ENCODE measurements at regions of chr9 and their contacts with region 1.

Region 1: GRCh38 chr9:107137495-107138202 is 145.4 kb upstream of the RAD23B start:
- DNase-seq: peak; percentile 17
- ATAC-seq: no peak
- H3K4me3 Mint-ChIP-seq: no peak overlapping the region
- H3K27ac Mint-ChIP-seq: no peak overlapping the region
- H3K4me1 Mint-ChIP-seq: no peaks in the 10 kb centered on the region
- H3K27me3 Mint-ChIP-seq: peaks cover 10% of the 10 kb centered on the region
- CTCF ChIP-seq: peak; percentile 62

Region 2: DNA sequence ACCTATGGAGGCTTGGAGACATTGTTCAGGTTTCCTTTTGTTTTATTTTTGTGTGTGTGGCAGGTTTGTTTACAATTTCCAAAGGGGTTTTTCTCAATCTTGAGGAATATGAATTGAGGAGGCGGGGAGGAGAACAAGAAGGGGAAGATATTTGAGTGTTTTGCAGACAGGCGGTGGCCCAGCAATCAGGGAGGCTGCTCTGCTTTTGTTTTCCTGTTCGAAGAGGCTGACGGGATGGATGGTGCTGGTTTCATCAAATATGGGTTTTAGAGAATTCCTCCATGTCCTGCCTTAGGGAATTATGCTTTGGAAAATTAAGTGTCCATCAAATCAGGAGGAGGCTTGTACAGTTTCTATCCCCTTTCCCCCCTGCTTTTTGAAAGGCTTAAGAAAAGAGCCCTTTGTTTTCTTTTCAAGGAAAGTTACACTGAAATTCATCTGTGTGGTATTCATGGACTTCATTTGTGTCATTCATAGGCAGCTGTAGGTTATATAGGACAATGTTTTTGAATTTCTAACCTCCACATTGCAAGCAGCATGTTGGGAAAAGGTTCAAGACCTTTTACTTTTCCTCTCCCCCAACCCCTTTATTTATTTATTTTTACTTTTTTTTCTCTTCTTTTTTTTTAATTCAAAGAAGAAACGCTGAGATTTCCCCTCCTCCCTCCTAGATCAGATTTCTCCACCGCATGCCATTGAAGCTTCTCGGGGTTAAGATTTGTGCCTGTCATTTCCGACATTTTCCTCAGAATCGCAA is 167.3 kb before region 1 on chr9:
- CTCF ChIA-PET with region 1: no interaction called
- POLR2A ChIA-PET with region 1: no interaction called
- intact Hi-C with region 1: no loop called
- DNase-seq: no peak
- ATAC-seq: no peak
- H3K4me3 Mint-ChIP-seq: no peak overlapping the region
- H3K27ac Mint-ChIP-seq: no peak overlapping the region
- H3K4me1 Mint-ChIP-seq: peaks cover under 1% of the 10 kb centered on the region
- H3K27me3 Mint-ChIP-seq: peaks cover 2% of the 10 kb centered on the region
- CTCF ChIP-seq: no peak

Region 3: DNA sequence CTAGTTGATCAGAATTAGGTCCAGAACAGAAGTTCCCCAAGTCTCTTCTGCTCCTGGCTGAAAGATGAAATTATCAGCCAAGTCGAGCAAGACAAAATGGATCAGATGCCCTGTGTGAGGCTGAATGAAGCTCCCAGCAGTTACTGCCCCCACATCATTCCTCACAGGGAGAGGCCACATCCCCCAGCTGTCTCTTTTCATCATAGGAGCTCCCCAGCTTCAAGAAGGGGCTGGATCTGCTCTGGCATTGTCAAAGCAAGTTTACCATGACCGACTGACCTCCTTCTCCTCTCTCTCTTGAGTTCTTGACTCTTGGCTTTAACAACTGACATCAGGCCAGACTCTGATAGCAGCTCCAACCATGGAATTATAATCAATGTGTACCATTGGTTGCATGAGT is 12.1 kb after region 1 on chr9:
- CTCF ChIA-PET with region 1: interaction called, 13 read pairs
- POLR2A ChIA-PET with region 1: no interaction called
- intact Hi-C with region 1: no loop called
- DNase-seq: no peak
- ATAC-seq: no peak
- H3K4me3 Mint-ChIP-seq: no peak overlapping the region
- H3K27ac Mint-ChIP-seq: no peak overlapping the region
- H3K4me1 Mint-ChIP-seq: no peaks in the 10 kb centered on the region
- H3K27me3 Mint-ChIP-seq: peaks cover 6% of the 10 kb centered on the region
- CTCF ChIP-seq: no peak

Region 4: DNA sequence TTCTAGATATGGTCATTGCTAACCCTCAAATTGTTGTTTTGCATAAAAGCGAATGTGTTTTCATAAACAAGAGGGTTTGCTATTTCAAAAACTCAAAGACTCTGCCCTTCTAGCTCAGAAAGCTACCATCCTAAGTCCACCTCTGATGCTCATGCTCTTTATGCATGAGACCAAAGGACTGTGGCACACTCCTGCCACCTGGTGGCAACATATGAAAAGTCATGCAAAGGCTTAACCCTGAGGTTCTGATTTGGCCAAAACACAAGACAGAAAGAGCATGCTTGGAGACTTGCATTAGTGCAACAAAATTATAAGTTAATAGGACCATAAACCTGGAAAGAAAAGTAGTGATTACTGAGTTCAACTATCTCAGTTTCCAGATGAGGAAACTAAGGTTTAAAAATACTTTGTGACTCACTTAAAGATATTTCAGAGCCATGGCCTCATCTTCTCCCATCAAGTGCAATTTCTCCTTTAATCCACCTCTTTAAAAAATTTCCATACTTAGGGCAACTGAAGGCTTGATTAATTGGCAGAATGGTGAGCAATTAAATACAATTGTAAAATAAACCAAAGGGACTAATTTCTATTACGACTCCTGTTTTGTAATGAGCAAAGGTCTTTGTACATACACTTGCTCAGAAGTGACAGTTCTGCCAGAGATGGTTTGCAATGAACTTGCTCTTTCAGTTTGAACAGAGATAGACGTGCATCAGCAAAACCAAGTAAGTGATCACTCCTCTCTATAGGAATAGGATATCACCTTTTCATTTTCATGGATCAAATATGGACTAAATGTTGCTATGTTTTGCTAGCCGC is 34.7 kb after region 1 on chr9:
- CTCF ChIA-PET with region 1: interaction called, 10 read pairs
- POLR2A ChIA-PET with region 1: no interaction called
- intact Hi-C with region 1: loop called (anchors 5 kb)
- DNase-seq: peak; percentile 80
- ATAC-seq: peak; percentile 70
- H3K4me3 Mint-ChIP-seq: no peak overlapping the region
- H3K27ac Mint-ChIP-seq: no peak overlapping the region
- H3K4me1 Mint-ChIP-seq: peaks cover 5% of the 10 kb centered on the region
- H3K27me3 Mint-ChIP-seq: peaks cover 6% of the 10 kb centered on the region
- CTCF ChIP-seq: peak; percentile 78

Region 5: GRCh38 chr9:107190061-107190935 is 52.6 kb after region 1 on chr9:
- CTCF ChIA-PET with region 1: no interaction called
- POLR2A ChIA-PET with region 1: no interaction called
- intact Hi-C with region 1: no loop called
- DNase-seq: no peak
- ATAC-seq: no peak
- H3K4me3 Mint-ChIP-seq: no peak overlapping the region
- H3K27ac Mint-ChIP-seq: no peak overlapping the region
- H3K4me1 Mint-ChIP-seq: no peaks in the 10 kb centered on the region
- H3K27me3 Mint-ChIP-seq: peaks cover 8% of the 10 kb centered on the region
- CTCF ChIP-seq: no peak